KBM-7 (cell line): ENCODE measurements at regions of chr3 and their contacts with region 1.

Region 1: DNA sequence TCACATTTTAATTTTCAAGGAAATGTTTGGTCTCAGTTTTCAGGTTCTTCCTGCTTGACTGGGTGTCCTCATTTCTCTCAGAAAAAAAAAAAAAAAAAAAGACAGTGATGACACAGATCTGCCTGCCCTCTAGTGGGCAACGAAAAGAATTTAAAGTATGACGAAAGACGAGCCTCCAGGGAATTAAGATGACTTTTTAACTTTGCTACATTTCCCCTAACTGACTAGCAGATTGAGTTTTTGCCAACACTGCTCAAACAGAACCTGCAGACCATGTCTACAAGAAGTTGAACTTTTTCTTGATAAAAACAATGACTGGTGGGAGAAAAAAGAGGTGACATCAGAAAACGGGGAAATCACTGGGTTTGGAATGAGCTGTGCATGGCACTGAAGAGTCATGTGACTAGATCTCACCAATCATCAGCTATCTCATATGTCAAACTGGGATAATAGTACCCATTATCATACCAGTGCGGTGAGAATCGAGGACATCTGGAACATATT is 40.8 kb downstream of the EOMES start:
- DNase-seq: peak; percentile 76

Region 2: GRCh38 chr3:27312044-27312668 is 369.1 kb before region 1 on chr3:
- in situ Hi-C with region 1: loop called (anchors 25 kb)
- DNase-seq: peak; percentile 73

Region 3: GRCh38 chr3:28210968-28211713 is 529.8 kb after region 1 on chr3:
- in situ Hi-C with region 1: no loop called
- DNase-seq: no peak